ENCODE measurements at regions of chr19 and their contacts with region 1.

Region 1: GRCh38 chr19:48501496-48502350 is 9.9 kb downstream of the LMTK3 start:
- DNase-seq: peak; percentile 94
- H3K4me3 ChIP-seq: peak overlapping the region; percentile 58
- H3K27ac ChIP-seq: peak overlapping the region; percentile 36
- H3K4me1 ChIP-seq: peaks cover 20% of the 10 kb centered on the region
- CTCF ChIP-seq: no peak

Region 2: GRCh38 chr19:48588670-48589399 is 87.1 kb after region 1 on chr19:
- CTCF ChIA-PET with region 1: interaction called, 3 read pairs
- POLR2A ChIA-PET with region 1: interaction called, 5 read pairs
- intact Hi-C with region 1: loop called (anchors 1 kb)
- DNase-seq: peak; percentile 87
- H3K4me3 ChIP-seq: peak overlapping the region; percentile 48
- H3K27ac ChIP-seq: no peak overlapping the region
- H3K4me1 ChIP-seq: peaks cover 4% of the 10 kb centered on the region
- CTCF ChIP-seq: peak; percentile 94